GM12878 (cell line): ENCODE measurements at regions of chr11 and their contacts with region 1.

Region 1: DNA sequence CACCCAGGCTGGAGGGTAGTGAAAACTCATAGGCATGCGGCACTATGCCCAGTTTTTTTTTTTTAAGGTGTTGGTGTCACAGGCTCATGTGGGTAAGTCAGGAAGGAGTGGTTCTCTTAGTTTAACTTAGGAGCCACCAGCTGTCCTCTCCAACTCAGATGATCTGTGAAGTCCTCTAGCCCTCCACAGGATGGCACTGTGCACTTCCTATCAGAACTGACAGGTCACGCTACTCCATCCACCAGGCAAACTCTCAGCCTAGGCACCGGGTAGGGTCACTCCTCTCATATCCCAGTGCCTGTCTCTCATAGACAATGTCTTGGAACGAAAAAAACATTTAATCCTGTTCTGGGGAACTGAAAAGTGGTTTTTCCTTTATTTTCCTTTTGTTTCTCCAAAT is 16.5 kb downstream of the NAP1L4 start:
- DNase-seq: no peak
- ATAC-seq: peak; percentile 94
- H3K4me3 ChIP-seq: no peak overlapping the region
- H3K27ac ChIP-seq: no peak overlapping the region
- H3K4me1 ChIP-seq: no peaks in the 10 kb centered on the region
- H3K27me3 ChIP-seq: no peaks in the 10 kb centered on the region
- CTCF ChIP-seq: peak; percentile 48 to 65 (median 60); a peak in 4 of 6 replicates
- EP300 ChIP-seq: no peak
- POLR2A ChIP-seq: no peak
- RAD21 ChIP-seq: peak; percentile 66

Region 2: GRCh38 chr11:3014057-3014938 is 38.7 kb after region 1 on chr11:
- CTCF ChIA-PET with region 1: interaction called, 13 read pairs
- POLR2A ChIA-PET with region 1: interaction called, 3 read pairs
- RAD21 ChIA-PET with region 1: interaction called, 4 read pairs
- SMC1A ChIA-PET with region 1: interaction called, 24 read pairs
- in situ Hi-C with region 1: no loop called
- intact Hi-C with region 1: no loop called
- DNase-seq: no peak
- ATAC-seq: peak; percentile 88
- H3K4me3 ChIP-seq: no peak overlapping the region
- H3K27ac ChIP-seq: peak overlapping the region; percentile 34; the same call in 1 of the 2 replicates
- H3K4me1 ChIP-seq: peaks cover 17% of the 10 kb centered on the region
- H3K27me3 ChIP-seq: no peaks in the 10 kb centered on the region
- CTCF ChIP-seq: peak in 1 of 3 experiments; percentile 7; a peak in 1 of 6 replicates
- EP300 ChIP-seq: no peak
- POLR2A ChIP-seq: no peak
- RAD21 ChIP-seq: no peak

Region 3: GRCh38 chr11:3021125-3021524 is 45.5 kb after region 1 on chr11:
- CTCF ChIA-PET with region 1: interaction called, 43 read pairs
- POLR2A ChIA-PET with region 1: interaction called, 3 read pairs
- RAD21 ChIA-PET with region 1: interaction called, 23 read pairs
- SMC1A ChIA-PET with region 1: interaction called, 26 read pairs
- in situ Hi-C with region 1: no loop called
- intact Hi-C with region 1: no loop called
- DNase-seq: no peak
- ATAC-seq: peak; percentile 83
- H3K4me3 ChIP-seq: no peak overlapping the region
- H3K27ac ChIP-seq: no peak overlapping the region
- H3K4me1 ChIP-seq: peaks cover 17% of the 10 kb centered on the region
- H3K27me3 ChIP-seq: no peaks in the 10 kb centered on the region
- CTCF ChIP-seq: peak; percentile 50 to 56 (median 55)
- EP300 ChIP-seq: no peak
- POLR2A ChIP-seq: no peak
- RAD21 ChIP-seq: peak; percentile 74